MCF 10A (cell line): ENCODE measurements at regions of chr16 and their contacts with region 1.

Region 1: DNA sequence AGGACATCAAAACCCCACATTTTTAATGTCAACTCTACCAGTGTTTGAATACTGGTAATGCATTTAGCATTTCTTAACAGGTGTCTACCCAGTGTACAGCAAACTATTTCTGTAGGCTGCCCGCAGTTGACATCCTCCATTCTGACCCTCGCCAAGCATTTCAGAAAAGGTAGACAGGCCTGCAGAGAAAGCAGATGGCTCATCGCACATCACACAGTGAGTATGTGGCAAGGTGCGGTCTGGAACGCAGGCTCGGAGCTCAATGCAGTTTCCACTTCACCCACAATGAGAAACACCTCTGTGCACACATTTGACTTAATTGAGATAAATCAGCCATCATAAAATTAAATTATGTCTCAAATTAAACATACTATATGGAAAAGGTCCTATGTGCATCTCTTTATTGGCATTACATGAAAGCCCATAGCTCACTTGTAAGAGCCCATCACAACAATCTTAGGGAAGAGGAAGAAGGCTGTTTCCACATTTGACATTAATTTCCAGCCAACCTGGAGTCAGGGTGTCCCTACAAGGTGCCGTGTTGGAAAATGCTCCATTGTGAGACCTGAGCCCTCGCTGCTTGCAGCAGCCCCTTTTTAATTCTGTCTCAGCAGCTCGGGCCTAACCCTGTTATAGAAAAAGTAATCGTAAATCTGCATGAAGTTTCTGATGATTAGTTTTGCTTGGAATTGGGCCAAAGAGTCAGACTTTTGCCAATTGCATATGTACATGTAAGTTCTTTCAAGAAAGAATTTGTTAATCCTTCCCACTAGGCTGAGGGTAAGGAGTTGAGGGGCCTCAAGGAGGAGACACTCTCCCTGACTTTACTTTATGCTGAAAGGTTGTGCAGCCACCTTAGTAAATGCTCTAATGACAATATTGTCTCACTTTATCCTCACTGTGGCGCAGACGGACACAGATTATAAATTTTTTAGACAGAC is 378.7 kb upstream of the DYNLRB2 start:
- DNase-seq: no peak
- H3K4me3 Mint-ChIP-seq: no peak overlapping the region
- H3K27ac Mint-ChIP-seq: no peak overlapping the region
- H3K4me1 Mint-ChIP-seq: peaks cover 18% of the 10 kb centered on the region
- H3K27me3 Mint-ChIP-seq: no peaks in the 10 kb centered on the region
- CTCF ChIP-seq: no peak

Region 2: GRCh38 chr16:80122115-80122514 is 40.0 kb before region 1 on chr16:
- CTCF ChIA-PET with region 1: no interaction called
- POLR2A ChIA-PET with region 1: no interaction called
- intact Hi-C with region 1: no loop called
- DNase-seq: no peak
- H3K4me3 Mint-ChIP-seq: no peak overlapping the region
- H3K27ac Mint-ChIP-seq: no peak overlapping the region
- H3K4me1 Mint-ChIP-seq: no peaks in the 10 kb centered on the region
- H3K27me3 Mint-ChIP-seq: no peaks in the 10 kb centered on the region
- CTCF ChIP-seq: no peak

Region 3: DNA sequence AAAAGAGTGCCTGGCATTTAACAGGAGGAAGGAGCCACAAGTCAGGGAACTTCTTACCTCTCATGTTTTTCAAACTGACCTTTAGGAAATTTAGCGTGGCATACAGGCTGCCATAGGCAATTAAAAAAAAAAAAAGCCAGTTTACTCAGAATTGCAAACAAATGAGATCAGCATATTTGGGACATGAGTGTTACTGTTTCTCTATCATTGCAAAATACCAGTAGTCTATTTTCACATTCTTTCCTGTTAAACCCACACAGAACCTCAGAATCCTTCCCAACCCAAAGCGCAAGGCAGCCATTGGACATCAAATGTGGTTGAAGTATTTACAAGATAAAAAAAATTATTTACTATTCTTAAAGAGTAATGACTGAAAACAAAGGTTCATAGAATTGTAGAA is 12.3 kb after region 1 on chr16:
- CTCF ChIA-PET with region 1: no interaction called
- POLR2A ChIA-PET with region 1: no interaction called
- intact Hi-C with region 1: no loop called
- DNase-seq: peak; percentile 58
- H3K4me3 Mint-ChIP-seq: peak overlapping the region; percentile 26
- H3K27ac Mint-ChIP-seq: peak overlapping the region; percentile 95
- H3K4me1 Mint-ChIP-seq: peaks cover 24% of the 10 kb centered on the region
- H3K27me3 Mint-ChIP-seq: no peaks in the 10 kb centered on the region
- CTCF ChIP-seq: no peak

Region 4: DNA sequence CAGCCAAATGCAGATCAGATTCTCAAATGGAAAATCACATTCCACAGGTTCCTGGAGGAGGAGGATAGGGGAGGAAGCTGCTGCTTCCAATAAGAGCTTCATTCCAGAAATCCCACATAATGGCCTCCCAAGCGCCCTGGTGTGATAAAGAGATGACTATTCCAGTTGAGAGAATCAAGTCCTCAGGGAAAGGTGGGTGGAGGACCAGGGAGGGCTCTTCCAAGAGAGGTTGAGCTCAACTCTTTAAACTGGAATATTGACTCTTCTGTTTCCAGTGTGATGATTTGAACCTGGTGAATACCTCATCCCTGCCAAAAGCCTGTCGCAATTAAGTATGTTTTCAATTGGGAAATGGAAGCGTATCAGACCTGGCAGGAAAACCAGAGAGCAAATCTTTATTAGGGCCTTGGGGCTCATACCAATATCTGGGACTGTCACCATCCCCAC is 297.3 kb after region 1 on chr16:
- CTCF ChIA-PET with region 1: no interaction called
- POLR2A ChIA-PET with region 1: no interaction called
- intact Hi-C with region 1: loop called (anchors 5 kb)
- DNase-seq: no peak
- H3K4me3 Mint-ChIP-seq: no peak overlapping the region
- H3K27ac Mint-ChIP-seq: no peak overlapping the region
- H3K4me1 Mint-ChIP-seq: peaks cover 4% of the 10 kb centered on the region
- H3K27me3 Mint-ChIP-seq: no peaks in the 10 kb centered on the region
- CTCF ChIP-seq: no peak

Region 5: GRCh38 chr16:80500526-80500925 is 338.5 kb after region 1 on chr16:
- CTCF ChIA-PET with region 1: no interaction called
- POLR2A ChIA-PET with region 1: no interaction called
- intact Hi-C with region 1: no loop called
- DNase-seq: no peak
- H3K4me3 Mint-ChIP-seq: no peak overlapping the region
- H3K27ac Mint-ChIP-seq: no peak overlapping the region
- H3K4me1 Mint-ChIP-seq: no peaks in the 10 kb centered on the region
- H3K27me3 Mint-ChIP-seq: peaks cover 9% of the 10 kb centered on the region
- CTCF ChIP-seq: no peak

Region 6: GRCh38 chr16:80613747-80614655 is 451.9 kb after region 1 on chr16:
- CTCF ChIA-PET with region 1: no interaction called
- POLR2A ChIA-PET with region 1: no interaction called
- intact Hi-C with region 1: no loop called
- DNase-seq: no peak
- H3K4me3 Mint-ChIP-seq: no peak overlapping the region
- H3K27ac Mint-ChIP-seq: no peak overlapping the region
- H3K4me1 Mint-ChIP-seq: no peaks in the 10 kb centered on the region
- H3K27me3 Mint-ChIP-seq: no peaks in the 10 kb centered on the region
- CTCF ChIP-seq: no peak